ENCODE measurements at regions of chr6 and their contacts with region 1.

Region 1: GRCh38 chr6:30769088-30769852 is 24.9 kb upstream of the IER3 start:
- DNase-seq: peak; percentile 87
- H3K4me3 ChIP-seq: peak overlapping the region; percentile 39
- CTCF ChIP-seq: no peak

Region 2: GRCh38 chr6:30396833-30397479 is 372.3 kb before region 1 on chr6:
- CTCF ChIA-PET with region 1: no interaction called
- POLR2A ChIA-PET with region 1: no interaction called
- DNase-seq: no peak
- H3K4me3 ChIP-seq: no peak overlapping the region
- CTCF ChIP-seq: peak; percentile 94

Region 3: GRCh38 chr6:30752157-30752927 is 16.9 kb before region 1 on chr6:
- CTCF ChIA-PET with region 1: interaction called, 7 read pairs
- POLR2A ChIA-PET with region 1: interaction called, 33 read pairs
- DNase-seq: peak; percentile 100
- H3K4me3 ChIP-seq: 0 out of 2 replicates have a peak overlapping the region, but pooled peaks have one; percentile 4
- CTCF ChIP-seq: no peak